Activated CD4-positive, alpha-beta memory T cell treated with anti-CD3 and anti-CD28 coated beads, Interleukin-2, amount 10 ng/mL, durations not matched to agents 7 days and 5 days (primary cell): ENCODE measurements at regions of chr17 and their contacts with region 1.

Region 1: DNA sequence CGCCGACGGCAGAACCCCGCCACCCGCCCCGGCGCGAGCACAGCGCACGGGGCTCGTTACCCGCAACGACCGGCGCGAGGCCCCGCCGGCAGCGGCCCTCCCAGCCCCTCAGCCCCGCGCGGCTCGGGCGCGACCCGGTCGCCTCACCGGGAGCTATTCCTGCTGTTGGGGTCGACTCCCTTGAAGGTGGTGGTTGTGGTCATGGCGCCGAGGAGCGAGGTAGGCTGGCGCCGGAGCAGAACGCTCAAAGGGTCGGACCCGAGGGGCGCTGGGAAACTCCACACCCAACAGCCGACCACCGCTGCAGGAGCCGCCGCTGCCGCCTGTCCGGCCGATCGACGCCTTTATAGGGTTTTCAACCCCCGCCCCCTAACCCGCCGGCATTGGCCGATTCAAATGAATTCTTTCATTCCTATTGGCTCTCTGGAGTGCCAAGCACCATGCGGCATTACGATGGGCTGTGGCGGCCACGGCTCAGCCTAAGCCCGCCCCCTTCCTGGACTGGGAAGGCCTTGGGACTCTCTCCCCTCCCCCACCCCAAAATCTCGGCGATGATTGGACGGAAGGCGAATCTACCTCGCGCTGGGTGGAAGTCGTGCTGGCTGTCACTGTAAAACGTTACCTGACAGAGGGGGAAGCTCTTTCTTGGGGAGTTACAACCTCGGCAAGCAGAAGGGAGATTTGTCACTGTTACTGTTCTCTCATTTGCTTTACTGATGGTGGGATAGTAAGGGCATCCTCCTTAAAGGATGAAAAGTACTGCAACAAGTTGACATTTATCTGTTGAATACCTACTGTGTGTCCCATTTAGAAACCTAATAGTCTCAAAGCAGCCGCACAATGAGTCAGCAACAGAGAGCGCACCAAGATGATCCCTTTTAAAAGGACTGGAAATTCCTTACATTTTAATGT is at the start of gene JPT1:
- DNase-seq: peak; percentile 99
- H3K4me3 Mint-ChIP-seq: peak within 1 kb of the TSS; percentile 93
- H3K27ac Mint-ChIP-seq: peak within 1 kb of the TSS; percentile 86
- H3K4me1 Mint-ChIP-seq: peaks cover 41% of the 10 kb centered on the region
- H3K27me3 Mint-ChIP-seq: no peaks in the 10 kb centered on the region
- total RNA-seq, gene JPT1: 305 to 329 TPM

Region 2: GRCh38 chr17:75124041-75124818 is 30.2 kb before region 1 on chr17:
- CTCF ChIA-PET with region 1: interaction called, 3 read pairs
- POLR2A ChIA-PET with region 1: interaction called, 19 read pairs
- DNase-seq: peak; percentile 84
- H3K4me3 Mint-ChIP-seq: peak overlapping the region; percentile 34
- H3K27ac Mint-ChIP-seq: peak overlapping the region; percentile 90
- H3K4me1 Mint-ChIP-seq: peaks cover 56% of the 10 kb centered on the region
- H3K27me3 Mint-ChIP-seq: no peaks in the 10 kb centered on the region

Region 3: GRCh38 chr17:75131280-75132017 is 23.0 kb before region 1 on chr17 and contains the start of gene NT5C:
- CTCF ChIA-PET with region 1: no interaction called
- POLR2A ChIA-PET with region 1: interaction called, 18 read pairs
- DNase-seq: peak; percentile 75
- H3K4me3 Mint-ChIP-seq: peak within 1 kb of the TSS; percentile 86
- H3K27ac Mint-ChIP-seq: peak within 1 kb of the TSS; percentile 85
- H3K4me1 Mint-ChIP-seq: peaks cover 41% of the 10 kb centered on the region
- H3K27me3 Mint-ChIP-seq: no peaks in the 10 kb centered on the region
- total RNA-seq, gene NT5C: 68.2 to 69.4 TPM

Region 4: DNA sequence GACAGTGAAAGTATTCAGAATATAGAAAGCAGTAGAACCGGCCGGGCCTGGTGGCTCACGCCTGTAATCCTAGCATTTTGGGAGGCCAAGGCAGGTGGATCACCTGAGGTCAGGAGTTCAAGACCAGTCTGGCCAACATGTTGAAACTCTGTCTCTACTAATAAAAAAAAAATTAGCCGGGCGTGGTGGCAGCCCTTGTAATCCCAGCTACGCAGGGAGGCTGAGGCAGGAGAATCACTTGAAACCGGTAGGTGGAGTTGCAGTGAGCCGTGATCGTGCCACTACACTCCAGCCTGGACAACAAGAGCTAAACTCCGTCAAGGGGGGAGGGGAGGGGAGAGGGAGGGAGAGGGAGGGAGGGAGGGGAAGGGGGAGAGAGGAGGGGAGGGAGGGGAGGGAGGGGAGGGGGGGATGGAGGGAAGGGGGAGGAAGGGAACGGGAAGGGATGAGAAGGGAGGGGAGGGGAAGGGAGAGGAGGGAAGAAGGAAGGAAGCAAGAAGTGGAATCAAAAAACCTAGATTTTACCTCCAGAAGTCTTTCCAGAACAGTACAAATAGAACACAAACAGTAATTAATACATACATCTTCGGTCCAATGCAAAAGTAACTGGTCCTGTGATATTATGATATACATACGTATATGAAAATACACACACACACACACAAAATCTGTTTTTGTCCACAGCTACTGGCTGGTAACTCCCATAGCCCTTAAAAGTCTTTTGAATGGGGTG is 12.0 kb before region 1 on chr17:
- CTCF ChIA-PET with region 1: interaction called, 5 read pairs
- POLR2A ChIA-PET with region 1: interaction called, 18 read pairs
- DNase-seq: no peak
- H3K4me3 Mint-ChIP-seq: no peak overlapping the region
- H3K27ac Mint-ChIP-seq: peak overlapping the region; percentile 84
- H3K4me1 Mint-ChIP-seq: peaks cover 29% of the 10 kb centered on the region
- H3K27me3 Mint-ChIP-seq: no peaks in the 10 kb centered on the region

Region 5: GRCh38 chr17:75182569-75183450 is 28.4 kb after region 1 on chr17 and contains the start of gene SUMO2:
- CTCF ChIA-PET with region 1: no interaction called
- POLR2A ChIA-PET with region 1: interaction called, 11 read pairs
- DNase-seq: peak; percentile 96
- H3K4me3 Mint-ChIP-seq: peak within 1 kb of the TSS; percentile 82
- H3K27ac Mint-ChIP-seq: peak within 1 kb of the TSS; percentile 99
- H3K4me1 Mint-ChIP-seq: peaks cover 45% of the 10 kb centered on the region
- H3K27me3 Mint-ChIP-seq: no peaks in the 10 kb centered on the region
- total RNA-seq, gene SUMO2: 548 to 559 TPM